HEK293 (cell line): ENCODE measurements at regions of chr14 and their contacts with region 1.

Region 1: GRCh38 chr14:64764641-64765520 is 60.7 kb downstream of the PLEKHG3 start:
- H3K4me3 ChIP-seq: no peak overlapping the region
- H3K27ac ChIP-seq: 0 out of 2 replicates have a peak overlapping the region, but pooled peaks have one; percentile 7
- H3K4me1 ChIP-seq: peaks cover 18% of the 10 kb centered on the region
- CTCF ChIP-seq: peak; percentile 77

Region 2: GRCh38 chr14:64580467-64580866 is 184.4 kb before region 1 on chr14:
- CTCF ChIA-PET with region 1: no interaction called
- POLR2A ChIA-PET with region 1: no interaction called
- H3K4me3 ChIP-seq: no peak overlapping the region
- H3K27ac ChIP-seq: no peak overlapping the region
- H3K4me1 ChIP-seq: no peaks in the 10 kb centered on the region
- CTCF ChIP-seq: no peak

Region 3: DNA sequence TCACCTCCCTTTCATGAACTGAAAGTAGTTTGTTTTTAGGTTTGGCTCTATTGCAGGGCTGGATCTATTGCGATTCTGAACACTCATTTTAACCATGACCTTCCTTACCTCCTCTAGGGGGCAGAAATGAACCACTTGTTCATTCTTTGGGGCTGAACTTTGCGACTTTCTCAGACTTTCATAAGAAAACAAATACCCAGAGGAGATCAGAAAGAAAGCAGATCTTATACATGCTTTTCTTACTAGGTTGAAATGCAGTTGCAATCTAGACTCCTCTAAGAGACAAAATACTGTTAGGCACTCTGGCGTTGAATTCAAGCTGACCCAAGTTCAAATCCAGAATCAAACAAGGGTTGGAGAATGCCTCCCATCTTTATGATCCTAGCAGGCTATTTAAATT is 93.3 kb before region 1 on chr14:
- CTCF ChIA-PET with region 1: interaction called, 93 read pairs
- POLR2A ChIA-PET with region 1: no interaction called
- H3K4me3 ChIP-seq: no peak overlapping the region
- H3K27ac ChIP-seq: no peak overlapping the region
- H3K4me1 ChIP-seq: 0 out of 2 replicates have a peak, but pooled peaks cover 3% of the 10 kb centered on the region
- CTCF ChIP-seq: 0 out of 2 replicates have a peak, but pooled peaks have one; percentile 9

Region 4: GRCh38 chr14:64937821-64938193 is 172.9 kb after region 1 on chr14:
- CTCF ChIA-PET with region 1: no interaction called
- POLR2A ChIA-PET with region 1: no interaction called
- H3K4me3 ChIP-seq: no peak overlapping the region
- H3K27ac ChIP-seq: no peak overlapping the region
- H3K4me1 ChIP-seq: peaks cover 9% of the 10 kb centered on the region
- CTCF ChIP-seq: no peak